Upper lobe of right lung (tissue), 1 donor: ENCODE measurements at regions of chr11 and their contacts with region 1.

Region 1: DNA sequence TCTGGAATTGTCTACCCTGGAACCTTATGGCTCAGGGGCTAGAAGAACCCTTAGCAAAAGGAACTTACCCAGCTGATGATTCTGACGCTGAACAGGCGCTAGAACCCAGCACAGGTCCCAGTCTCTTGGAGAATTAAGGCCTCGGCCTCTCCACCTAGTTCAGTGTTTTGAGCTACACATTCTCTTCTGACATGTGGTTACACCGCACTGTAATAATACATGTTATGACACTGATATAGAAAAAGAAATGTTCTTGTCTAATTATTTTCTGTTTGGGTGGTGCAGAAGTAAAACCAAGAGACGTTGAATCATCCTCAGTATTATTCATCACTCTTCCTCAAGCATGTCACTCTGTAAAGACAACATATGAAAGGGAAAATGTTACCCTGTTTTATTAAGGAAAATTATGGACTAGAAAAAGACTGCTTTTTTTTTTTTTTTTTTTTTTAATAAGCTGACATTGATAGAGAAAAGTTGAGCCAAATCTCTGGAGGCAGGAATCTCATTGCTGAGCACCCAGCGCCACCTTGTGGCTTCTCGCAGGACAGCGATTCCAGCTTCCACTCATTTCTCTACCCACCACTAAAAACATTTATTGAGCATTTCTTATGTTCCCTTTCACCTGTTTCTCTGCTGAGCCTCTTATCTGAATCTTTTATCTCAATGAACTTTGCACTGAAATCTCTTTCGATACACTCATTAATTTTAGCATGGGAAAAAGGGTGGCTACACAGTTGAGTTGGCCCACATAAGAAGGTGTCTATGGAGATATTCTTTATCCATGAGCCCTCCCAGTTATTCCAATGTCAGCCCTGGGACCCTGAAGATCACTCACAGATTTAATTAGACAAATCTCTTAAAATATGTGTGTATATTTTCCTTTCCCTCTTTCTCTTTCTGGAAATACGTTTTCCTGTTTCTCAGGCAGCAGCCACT is 12.6 kb upstream of the APLNR start:
- DNase-seq: peak; percentile 80
- ATAC-seq: peak; percentile 81
- H3K4me3 ChIP-seq: no peak overlapping the region
- H3K27ac ChIP-seq: no peak overlapping the region
- H3K4me1 ChIP-seq: peaks cover 8% of the 10 kb centered on the region
- H3K27me3 ChIP-seq: no peaks in the 10 kb centered on the region
- CTCF ChIP-seq: peak; percentile 83

Region 2: DNA sequence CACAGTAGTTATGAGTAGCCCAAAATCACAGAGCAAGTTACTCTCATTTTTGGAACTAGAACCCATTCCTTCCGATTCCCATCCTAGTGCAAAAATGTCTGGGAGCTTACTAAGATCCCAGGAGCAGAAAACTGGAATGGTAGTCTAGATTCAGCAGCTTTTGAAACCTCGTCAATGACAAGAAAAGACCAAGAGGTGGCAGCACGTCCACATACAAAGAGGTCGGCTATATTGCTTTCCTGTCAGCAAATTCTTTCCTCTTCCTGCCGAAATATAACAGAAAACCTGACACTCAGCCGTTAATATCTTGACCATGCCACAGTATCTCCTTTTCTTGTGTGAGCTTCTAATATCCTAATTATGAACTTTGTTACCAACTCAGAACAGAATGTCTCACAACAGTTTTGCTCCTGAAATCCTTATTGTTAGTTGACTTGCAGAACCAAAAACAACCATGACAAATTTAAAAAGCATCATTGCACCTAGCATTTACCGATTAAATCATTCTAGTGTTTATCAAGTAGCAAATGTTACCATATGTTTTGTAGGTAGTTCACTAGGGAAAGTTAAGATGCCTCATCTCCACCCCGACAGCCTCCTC is 408.3 kb before region 1 on chr11:
- intact Hi-C with region 1: loop called (anchors 5 kb)
- DNase-seq: no peak
- ATAC-seq: peak; percentile 89
- H3K4me3 ChIP-seq: no peak overlapping the region
- H3K27ac ChIP-seq: no peak overlapping the region
- H3K4me1 ChIP-seq: peaks cover 3% of the 10 kb centered on the region
- H3K27me3 ChIP-seq: no peaks in the 10 kb centered on the region
- CTCF ChIP-seq: peak; percentile 77

Region 3: DNA sequence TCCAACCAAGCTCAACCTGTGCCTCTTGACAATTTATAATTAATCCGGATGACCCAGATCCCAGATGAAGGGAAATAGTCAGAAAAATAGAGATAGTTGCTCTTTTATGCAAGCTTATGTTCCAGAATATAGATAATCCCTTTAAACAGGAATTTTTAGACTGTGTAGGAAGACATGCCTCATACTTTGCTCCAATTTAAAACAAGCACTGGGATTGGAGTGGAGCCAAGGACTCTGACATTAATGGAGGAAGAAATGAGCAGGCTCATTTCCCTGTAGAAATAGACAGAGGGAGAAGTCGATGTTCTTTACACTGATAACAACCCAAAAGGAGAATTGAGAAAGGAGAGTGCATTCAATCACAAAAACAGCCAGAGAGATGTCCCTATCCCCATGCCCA is 138.0 kb before region 1 on chr11:
- intact Hi-C with region 1: no loop called
- DNase-seq: no peak
- ATAC-seq: no peak
- H3K4me3 ChIP-seq: no peak overlapping the region
- H3K27ac ChIP-seq: no peak overlapping the region
- H3K4me1 ChIP-seq: no peaks in the 10 kb centered on the region
- H3K27me3 ChIP-seq: no peaks in the 10 kb centered on the region
- CTCF ChIP-seq: no peak

Region 4: DNA sequence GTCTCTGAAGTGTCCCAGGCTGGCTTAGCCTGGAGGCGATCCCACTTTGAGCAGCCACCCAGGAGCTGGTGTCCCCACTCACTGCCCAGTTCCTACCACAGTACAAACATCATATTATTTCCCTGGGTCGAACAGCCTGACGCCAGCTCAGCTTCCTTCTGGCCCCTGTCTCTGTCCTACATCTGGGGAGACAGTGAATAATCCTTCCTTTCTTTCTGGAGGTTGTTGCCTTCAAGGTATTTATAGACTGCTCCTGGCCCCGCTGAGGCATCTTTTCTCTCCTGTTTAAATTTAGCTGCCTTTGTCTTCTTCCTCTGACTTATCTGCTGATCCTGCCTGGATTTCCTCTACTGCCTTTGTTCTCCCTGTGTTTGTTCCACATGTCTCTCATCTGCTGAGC is 124.7 kb before region 1 on chr11:
- intact Hi-C with region 1: loop called (anchors 5 kb)
- DNase-seq: no peak
- ATAC-seq: no peak
- H3K4me3 ChIP-seq: no peak overlapping the region
- H3K27ac ChIP-seq: no peak overlapping the region
- H3K4me1 ChIP-seq: no peaks in the 10 kb centered on the region
- H3K27me3 ChIP-seq: peaks cover 7% of the 10 kb centered on the region
- CTCF ChIP-seq: no peak

Region 5: GRCh38 chr11:57131080-57131790 is 118.4 kb before region 1 on chr11:
- intact Hi-C with region 1: loop called (anchors 5 kb)
- DNase-seq: no peak
- ATAC-seq: peak; percentile 64
- H3K4me3 ChIP-seq: no peak overlapping the region
- H3K27ac ChIP-seq: no peak overlapping the region
- H3K4me1 ChIP-seq: no peaks in the 10 kb centered on the region
- H3K27me3 ChIP-seq: peaks cover 7% of the 10 kb centered on the region
- CTCF ChIP-seq: peak; percentile 59

Region 6: DNA sequence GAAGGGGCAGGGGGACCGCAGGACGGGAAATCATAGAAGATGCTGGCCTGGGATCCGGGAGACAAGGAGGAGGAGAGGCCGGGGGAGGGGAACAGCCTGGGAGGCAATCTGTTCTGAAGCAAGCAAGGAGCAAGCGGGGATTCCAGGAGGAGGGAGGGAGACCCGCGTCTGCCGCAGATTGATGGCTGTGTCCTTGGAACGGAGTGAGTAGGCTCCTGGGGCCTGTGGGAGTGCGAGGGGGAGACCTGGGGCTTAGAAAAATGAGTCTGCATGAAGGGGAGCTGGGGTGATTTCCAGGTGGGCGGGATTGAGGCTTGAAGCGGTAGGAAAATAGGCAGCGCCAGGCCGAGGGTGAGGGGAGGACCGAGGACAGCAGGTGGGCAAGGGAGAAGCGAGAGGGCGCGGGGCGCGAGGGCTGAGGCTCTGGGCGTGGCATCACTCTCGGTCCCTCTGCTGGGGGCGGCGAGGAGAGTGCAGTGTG is 69.5 kb before region 1 on chr11:
- intact Hi-C with region 1: no loop called
- DNase-seq: no peak
- ATAC-seq: peak; percentile 17
- H3K4me3 ChIP-seq: no peak overlapping the region
- H3K27ac ChIP-seq: no peak overlapping the region
- H3K4me1 ChIP-seq: no peaks in the 10 kb centered on the region
- H3K27me3 ChIP-seq: no peaks in the 10 kb centered on the region
- CTCF ChIP-seq: no peak

Region 7: DNA sequence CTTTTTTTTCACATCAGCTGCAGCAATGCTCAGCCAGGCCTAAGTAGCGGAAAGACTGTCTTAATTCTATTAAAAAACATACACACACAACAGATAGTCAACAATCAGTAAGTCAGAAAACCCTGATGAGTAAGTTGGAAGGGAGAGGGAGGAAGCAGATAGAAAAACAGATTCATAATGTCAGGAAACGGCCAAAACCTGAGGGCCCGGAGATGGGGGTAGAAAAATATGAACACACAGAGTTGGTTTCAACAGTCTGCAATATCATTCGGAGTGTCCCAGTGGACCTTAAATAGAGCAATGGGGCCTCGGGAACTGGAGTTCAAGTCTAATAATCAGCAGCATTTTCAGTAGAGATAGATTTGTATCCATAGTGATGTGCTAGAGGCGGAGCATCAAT is 53.1 kb before region 1 on chr11:
- intact Hi-C with region 1: no loop called
- DNase-seq: no peak
- ATAC-seq: no peak
- H3K4me3 ChIP-seq: no peak overlapping the region
- H3K27ac ChIP-seq: no peak overlapping the region
- H3K4me1 ChIP-seq: peaks cover 8% of the 10 kb centered on the region
- H3K27me3 ChIP-seq: no peaks in the 10 kb centered on the region
- CTCF ChIP-seq: no peak